Endothelial cell of umbilical vein (primary cell): ENCODE measurements at regions of chr6 and their contacts with region 1.

Region 1: DNA sequence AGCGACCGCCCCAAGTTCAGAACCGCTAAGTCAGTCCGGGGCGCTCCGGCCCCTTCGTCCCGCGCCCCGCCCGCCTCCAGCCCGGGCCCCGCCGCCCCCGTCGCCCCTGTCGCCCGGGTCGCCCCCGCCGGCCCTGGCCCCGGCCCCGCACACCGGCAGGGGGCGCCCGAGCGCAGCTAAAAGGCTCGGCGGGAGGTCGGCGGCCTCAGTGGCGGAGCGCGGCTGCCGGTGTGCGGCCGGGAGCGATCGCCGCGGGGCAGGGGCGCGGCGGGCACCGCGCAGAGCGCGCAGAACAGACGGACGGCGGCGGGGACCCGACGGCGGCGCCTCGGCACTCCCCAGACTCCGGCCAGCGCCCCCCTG is at the start of gene FNDC1:
- DNase-seq: no peak
- H3K4me3 ChIP-seq: peak within 1 kb of the TSS in 2 of 3 experiments; percentile 11 to 27
- H3K27ac ChIP-seq: no peak within 1 kb of the TSS
- H3K4me1 ChIP-seq: peaks cover 3% of the 10 kb centered on the region
- H3K27me3 ChIP-seq: peaks cover 48 to 77% of the 10 kb centered on the region in 2 experiments
- CTCF ChIP-seq: peak; percentile 15 to 26
- POLR2A ChIP-seq: no peak
- total RNA-seq, gene FNDC1: 0.04 TPM in 1 of 2 replicates, not detected in the other

Region 2: GRCh38 chr6:159125951-159126352 is 43.2 kb before region 1 on chr6:
- CTCF ChIA-PET with region 1: no interaction called
- POLR2A ChIA-PET with region 1: no interaction called
- dilution Hi-C with region 1: no loop called
- intact Hi-C with region 1: no loop called
- DNase-seq: no peak
- H3K4me3 ChIP-seq: no peak overlapping the region
- H3K27ac ChIP-seq: no peak overlapping the region
- H3K4me1 ChIP-seq: no peaks in the 10 kb centered on the region
- H3K27me3 ChIP-seq: peaks cover 0 to 5% of the 10 kb centered on the region in 2 experiments
- CTCF ChIP-seq: no peak
- POLR2A ChIP-seq: no peak

Region 3: GRCh38 chr6:159608961-159609651 is 439.9 kb after region 1 on chr6:
- CTCF ChIA-PET with region 1: interaction called, 5 read pairs
- POLR2A ChIA-PET with region 1: no interaction called
- dilution Hi-C with region 1: no loop called
- intact Hi-C with region 1: loop called (anchors 1 kb)
- DNase-seq: no peak
- H3K4me3 ChIP-seq: no peak overlapping the region
- H3K27ac ChIP-seq: no peak overlapping the region
- H3K4me1 ChIP-seq: no peaks in the 10 kb centered on the region
- H3K27me3 ChIP-seq: no peaks in the 10 kb centered on the region
- CTCF ChIP-seq: peak in 1 of 2 donors; percentile 12
- POLR2A ChIP-seq: no peak

Region 4: DNA sequence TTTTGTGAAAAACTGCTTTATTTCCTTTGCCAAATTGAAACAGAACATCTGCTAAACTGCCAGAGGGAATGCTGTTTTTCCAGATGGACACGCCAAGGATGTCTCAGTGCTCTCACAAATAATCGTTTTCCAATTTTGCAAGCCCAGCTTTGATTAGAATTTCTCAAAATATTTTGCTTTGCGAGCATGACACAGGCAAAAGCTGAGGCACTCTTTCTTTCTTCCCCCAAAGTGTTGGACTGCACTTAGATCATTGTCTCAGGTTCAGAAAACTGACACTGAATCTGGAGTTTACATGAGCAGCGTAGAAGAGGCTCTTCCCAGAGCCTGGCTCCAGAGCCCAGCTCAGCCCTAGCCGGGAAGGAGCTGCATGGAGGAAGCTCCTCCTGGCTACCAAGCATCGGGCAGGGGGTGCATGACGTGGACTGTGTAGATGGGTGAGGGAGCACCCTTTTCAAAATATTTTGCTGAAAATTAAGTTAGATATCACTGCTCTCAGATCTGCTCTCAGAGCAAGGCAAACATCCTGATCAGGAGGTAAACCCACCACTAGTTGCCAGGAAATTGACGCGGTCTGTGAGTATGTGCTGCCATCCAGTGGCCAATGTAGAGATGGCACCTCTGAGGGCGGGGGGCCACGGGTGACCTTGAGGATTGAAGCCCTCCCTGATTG is 1286.5 kb after region 1 on chr6:
- CTCF ChIA-PET with region 1: no interaction called
- POLR2A ChIA-PET with region 1: no interaction called
- dilution Hi-C with region 1: no loop called
- intact Hi-C with region 1: loop called (anchors 5 kb)
- DNase-seq: peak; percentile 43
- H3K4me3 ChIP-seq: no peak overlapping the region
- H3K27ac ChIP-seq: no peak overlapping the region
- H3K4me1 ChIP-seq: no peaks in the 10 kb centered on the region
- H3K27me3 ChIP-seq: no peaks in the 10 kb centered on the region
- CTCF ChIP-seq: peak; percentile 77 to 80
- POLR2A ChIP-seq: no peak